ENCODE measurements at regions of chr5 and their contacts with region 1.

Region 1: GRCh38 chr5:52799983-52800393 is 12.3 kb downstream of the ITGA1 start:
- DNase-seq: peak; percentile 92
- H3K4me3 ChIP-seq: peak overlapping the region; percentile 75 to 85
- H3K27ac ChIP-seq: peak overlapping the region; percentile 93 to 95
- H3K4me1 ChIP-seq: peaks cover 12 to 41% of the 10 kb centered on the region in 2 experiments
- H3K27me3 ChIP-seq: no peaks in the 10 kb centered on the region
- CTCF ChIP-seq: no peak
- EP300 ChIP-seq: no peak
- RAD21 ChIP-seq: no peak

Region 2: DNA sequence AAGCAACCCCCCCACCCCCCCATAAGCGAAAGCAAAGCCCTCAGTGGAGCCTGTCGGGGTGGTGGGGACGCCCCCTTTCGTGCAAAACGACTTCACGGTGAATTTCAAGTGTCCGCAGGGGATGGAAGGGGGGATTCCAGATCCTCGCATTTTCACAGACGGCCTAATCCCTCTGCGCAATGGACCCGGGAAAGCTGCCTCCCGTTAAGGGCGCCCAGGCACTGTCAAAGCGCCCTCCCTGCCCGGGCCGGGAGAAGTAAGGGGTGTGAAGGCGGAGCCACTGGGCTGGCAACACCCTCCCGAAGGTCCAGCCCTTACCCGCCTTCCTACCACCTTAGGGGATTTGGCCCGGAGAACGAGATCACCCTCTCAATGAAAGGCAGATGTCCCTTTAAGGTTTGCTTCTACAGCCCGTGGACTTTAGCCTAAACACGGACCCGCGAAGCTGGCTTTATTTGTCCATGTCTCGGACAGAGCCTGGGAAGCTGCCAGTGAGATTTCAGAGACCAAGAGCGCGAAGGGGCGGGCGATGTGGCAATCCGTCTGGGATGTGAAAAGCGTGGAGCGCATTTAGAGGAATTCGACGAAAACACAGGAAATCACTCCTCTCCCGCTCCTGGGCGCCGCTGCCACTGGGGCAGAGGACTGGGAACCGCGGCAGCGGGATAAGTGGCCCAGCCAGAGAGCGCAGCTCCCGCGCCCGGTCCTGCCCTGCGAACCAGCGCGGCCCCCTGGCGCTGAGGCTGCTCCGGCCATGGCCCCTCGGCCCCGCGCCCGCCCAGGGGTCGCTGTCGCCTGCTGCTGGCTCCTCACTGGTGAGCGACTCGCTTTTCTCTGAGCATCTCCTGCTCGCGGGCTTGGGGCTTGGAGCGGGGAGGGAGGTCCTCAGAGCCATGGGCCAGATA is 12.1 kb before region 1 on chr5 and contains the starts of genes ITGA1 and PELO:
- CTCF ChIA-PET with region 1: interaction called, 17 read pairs
- POLR2A ChIA-PET with region 1: interaction called, 11 read pairs
- DNase-seq: peak; percentile 87
- H3K4me3 ChIP-seq: peak within 1 kb of the TSS; percentile 80 to 87
- H3K27ac ChIP-seq: peak within 1 kb of the TSS; percentile 89 to 97
- H3K4me1 ChIP-seq: peaks cover 5 to 16% of the 10 kb centered on the region in 2 experiments; a peak in 2 of 4 replicates
- H3K27me3 ChIP-seq: no peaks in the 10 kb centered on the region
- CTCF ChIP-seq: peak; percentile 55
- EP300 ChIP-seq: peak in 1 of 2 experiments; percentile 41; a peak in 1 of 4 replicates
- RAD21 ChIP-seq: peak; percentile 59
- polyA plus RNA-seq, gene ITGA1: 7.7 and 9.9 TPM in 2 replicates
- polyA plus RNA-seq, gene PELO: 10.7 and 11.5 TPM in 2 replicates

Region 3: GRCh38 chr5:52915176-52915875 is 115.3 kb after region 1 on chr5:
- CTCF ChIA-PET with region 1: interaction called, 13 read pairs
- POLR2A ChIA-PET with region 1: no interaction called
- DNase-seq: peak; percentile 65
- H3K4me3 ChIP-seq: peak overlapping the region; percentile 40 to 57; a peak in 3 of 4 replicates
- H3K27ac ChIP-seq: peak overlapping the region in 1 of 2 experiments; percentile 69; a peak in 3 of 4 replicates
- H3K4me1 ChIP-seq: peaks cover 0 to 2% of the 10 kb centered on the region in 2 experiments; a peak in 1 of 4 replicates
- H3K27me3 ChIP-seq: no peaks in the 10 kb centered on the region
- CTCF ChIP-seq: peak; percentile 91
- EP300 ChIP-seq: no peak
- RAD21 ChIP-seq: peak; percentile 78